GM10248 (cell line): ENCODE measurements at regions of chr3 and their contacts with region 1.

Region 1: DNA sequence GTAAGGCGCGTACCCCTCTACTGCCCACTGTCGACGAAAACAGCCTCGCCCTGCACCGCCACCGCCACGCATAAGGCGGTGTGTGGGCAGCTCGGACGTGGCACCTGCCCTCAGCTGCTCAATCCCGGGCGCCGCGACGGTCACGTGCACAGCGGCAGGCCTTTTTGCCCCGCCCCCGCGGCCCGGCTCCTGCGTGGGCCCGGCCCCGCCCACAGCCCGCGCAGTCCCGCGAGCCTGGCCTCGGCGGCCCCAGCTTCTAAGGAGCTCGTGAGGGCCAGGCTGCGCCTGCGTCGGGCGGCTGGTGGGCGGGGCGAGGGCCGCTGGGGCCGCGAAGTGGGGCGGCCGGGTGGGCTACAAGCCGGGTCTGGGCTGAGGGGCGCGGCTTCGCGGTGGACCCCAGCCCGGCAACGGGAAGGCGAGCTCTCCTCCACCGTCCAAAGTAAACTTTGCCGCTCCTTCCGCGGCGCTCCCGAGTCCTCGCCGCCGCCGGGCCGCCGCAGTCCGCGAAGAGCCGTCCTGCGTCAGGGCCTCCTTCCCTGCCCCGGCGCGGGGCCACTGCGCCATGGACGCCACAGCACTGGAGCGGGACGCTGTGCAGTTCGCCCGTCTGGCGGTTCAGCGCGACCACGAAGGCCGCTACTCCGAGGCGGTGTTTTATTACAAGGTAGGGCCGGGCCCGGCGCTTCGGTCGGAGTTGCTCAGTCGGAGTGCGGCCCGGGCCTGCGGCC is at the start of gene CAPN7:
- DNase-seq: peak; percentile 97
- CTCF ChIP-seq: peak; percentile 39

Region 2: GRCh38 chr3:14651440-14652251 is 554.5 kb before region 1 on chr3 and contains the start of gene CCDC174:
- CTCF ChIA-PET with region 1: no interaction called
- POLR2A ChIA-PET with region 1: no interaction called
- DNase-seq: peak; percentile 94
- CTCF ChIP-seq: no peak

Region 3: GRCh38 chr3:15108082-15108545 is 98.0 kb before region 1 on chr3:
- CTCF ChIA-PET with region 1: interaction called, 36 read pairs
- POLR2A ChIA-PET with region 1: no interaction called
- DNase-seq: peak; percentile 87
- CTCF ChIP-seq: peak; percentile 90

Region 4: GRCh38 chr3:15186101-15186476 is 20.0 kb before region 1 on chr3:
- CTCF ChIA-PET with region 1: interaction called, 15 read pairs
- POLR2A ChIA-PET with region 1: no interaction called
- DNase-seq: no peak
- CTCF ChIP-seq: no peak

Region 5: GRCh38 chr3:15405448-15406050 is 199.5 kb after region 1 on chr3:
- CTCF ChIA-PET with region 1: interaction called, 31 read pairs
- POLR2A ChIA-PET with region 1: no interaction called
- DNase-seq: peak; percentile 58
- CTCF ChIP-seq: peak; percentile 63

Region 6: GRCh38 chr3:15557511-15557946 is 351.4 kb after region 1 on chr3:
- CTCF ChIA-PET with region 1: interaction called, 23 read pairs
- POLR2A ChIA-PET with region 1: no interaction called
- DNase-seq: peak; percentile 35
- CTCF ChIP-seq: peak; percentile 38